Activated CD4-positive, alpha-beta T cell treated with anti-CD3 and anti-CD28 coated beads for 36 hours (primary cell): ENCODE measurements at regions of chr4 and their contacts with region 1.

Region 1: GRCh38 chr4:122555216-122555615 is 65.7 kb downstream of the IL21 start:
- DNase-seq: no peak
- ATAC-seq: no peak
- H3K4me3 Mint-ChIP-seq: no peak overlapping the region
- H3K27ac Mint-ChIP-seq: peak overlapping the region; percentile 63
- H3K4me1 Mint-ChIP-seq: peaks cover 68% of the 10 kb centered on the region
- H3K27me3 Mint-ChIP-seq: no peaks in the 10 kb centered on the region

Region 2: DNA sequence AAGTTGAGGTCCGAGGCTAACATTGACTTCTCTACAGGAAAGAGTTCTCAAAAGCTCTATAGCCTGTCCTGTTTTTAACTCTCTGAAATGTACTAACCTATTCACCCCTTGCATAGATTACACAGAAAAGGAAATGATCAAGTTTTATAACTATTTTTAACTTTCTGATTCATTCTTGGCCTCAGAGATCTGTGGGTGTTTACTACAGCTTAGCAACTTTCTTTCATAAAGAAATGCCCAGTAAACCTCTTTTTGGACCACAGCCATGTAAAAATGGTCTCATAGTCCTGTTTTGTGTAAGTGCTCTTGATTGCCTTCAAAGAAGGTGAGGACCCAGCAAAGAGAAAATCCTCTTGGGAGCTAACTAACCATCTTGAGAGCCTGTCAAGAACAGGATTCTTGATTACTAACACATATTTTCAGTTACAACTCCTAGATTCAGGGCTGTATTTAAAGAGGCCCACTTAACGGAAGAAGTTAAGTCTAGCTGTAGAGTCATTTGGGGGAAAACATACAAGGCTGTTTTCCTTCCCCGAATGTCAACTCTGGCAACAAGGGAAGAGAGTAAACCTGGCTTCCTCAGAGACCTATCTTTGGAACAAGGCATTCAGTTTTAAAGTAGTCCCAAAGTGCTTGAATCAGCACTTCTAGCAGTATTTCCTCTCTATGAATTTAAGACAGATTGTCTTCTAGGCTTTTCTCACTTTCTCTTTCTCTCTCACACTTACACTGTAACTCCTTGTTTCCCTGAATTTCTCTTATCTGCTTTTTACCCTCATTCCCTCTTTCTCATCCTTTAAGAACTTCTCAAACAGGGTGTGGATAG is 12.6 kb before region 1 on chr4:
- CTCF ChIA-PET with region 1: interaction called, 7 read pairs
- POLR2A ChIA-PET with region 1: interaction called, 7 read pairs
- intact Hi-C with region 1: loop called (anchors 1 to 2 kb)
- DNase-seq: no peak
- ATAC-seq: peak; percentile 63
- H3K4me3 Mint-ChIP-seq: peak overlapping the region; percentile 53
- H3K27ac Mint-ChIP-seq: peak overlapping the region; percentile 95
- H3K4me1 Mint-ChIP-seq: peaks cover 94% of the 10 kb centered on the region
- H3K27me3 Mint-ChIP-seq: no peaks in the 10 kb centered on the region